ENCODE measurements at regions of chr7 and their contacts with region 1.

Region 1: GRCh38 chr7:127585044-127585953 is at the start of gene GCC1:
- DNase-seq: peak; percentile 89 to 98 (median 94)
- ATAC-seq: peak; percentile 83
- H3K4me3 ChIP-seq: peak within 1 kb of the TSS; percentile 91 to 99
- H3K4me3 Mint-ChIP-seq: peak within 1 kb of the TSS; percentile 92
- H3K27ac ChIP-seq: peak within 1 kb of the TSS; percentile 94 to 95
- H3K27ac Mint-ChIP-seq: peak within 1 kb of the TSS; percentile 93
- H3K4me1 ChIP-seq: peaks cover 71% of the 10 kb centered on the region
- H3K4me1 Mint-ChIP-seq: peaks cover 79% of the 10 kb centered on the region
- H3K27me3 ChIP-seq: no peaks in the 10 kb centered on the region
- H3K27me3 Mint-ChIP-seq: no peaks in the 10 kb centered on the region
- CTCF ChIP-seq: no peak
- total RNA-seq, gene GCC1: 33.8 to 36.6 TPM

Region 2: GRCh38 chr7:127651556-127652332 is 66.4 kb after region 1 on chr7 and contains the start of gene SND1:
- CTCF ChIA-PET with region 1: interaction called, 3 read pairs
- POLR2A ChIA-PET with region 1: interaction called, 4 read pairs
- intact Hi-C with region 1: loop called (anchors 1 kb)
- DNase-seq: peak; percentile 96 to 100 (median 98)
- ATAC-seq: peak; percentile 94
- H3K4me3 ChIP-seq: peak within 1 kb of the TSS; percentile 82 to 98
- H3K4me3 Mint-ChIP-seq: peak within 1 kb of the TSS; percentile 98
- H3K27ac ChIP-seq: peak within 1 kb of the TSS; percentile 92 to 98
- H3K27ac Mint-ChIP-seq: peak within 1 kb of the TSS; percentile 99
- H3K4me1 ChIP-seq: peaks cover 35% of the 10 kb centered on the region
- H3K4me1 Mint-ChIP-seq: peaks cover 50% of the 10 kb centered on the region
- H3K27me3 ChIP-seq: no peaks in the 10 kb centered on the region
- H3K27me3 Mint-ChIP-seq: no peaks in the 10 kb centered on the region
- CTCF ChIP-seq: no peak
- total RNA-seq, gene SND1: 87.7 to 101 TPM

Region 3: GRCh38 chr7:127678947-127679346 is 93.6 kb after region 1 on chr7:
- CTCF ChIA-PET with region 1: no interaction called
- POLR2A ChIA-PET with region 1: no interaction called
- intact Hi-C with region 1: no loop called
- DNase-seq: no peak
- ATAC-seq: no peak
- H3K4me3 ChIP-seq: no peak overlapping the region
- H3K4me3 Mint-ChIP-seq: no peak overlapping the region
- H3K27ac ChIP-seq: no peak overlapping the region
- H3K27ac Mint-ChIP-seq: no peak overlapping the region
- H3K4me1 ChIP-seq: no peaks in the 10 kb centered on the region
- H3K4me1 Mint-ChIP-seq: peaks cover 36% of the 10 kb centered on the region
- H3K27me3 ChIP-seq: no peaks in the 10 kb centered on the region
- H3K27me3 Mint-ChIP-seq: no peaks in the 10 kb centered on the region
- CTCF ChIP-seq: no peak

Measured in CD8-positive, alpha-beta T cell (primary cell).